Mammary epithelial cell (primary cell): ENCODE measurements at regions of chr2 and their contacts with region 1.

Region 1: GRCh38 chr2:136247204-136247950 is 129.4 kb upstream of the CXCR4 start:
- DNase-seq: peak; percentile 9
- H3K4me3 ChIP-seq: no peak overlapping the region
- H3K27ac ChIP-seq: no peak overlapping the region
- H3K4me1 ChIP-seq: no peaks in the 10 kb centered on the region
- H3K27me3 ChIP-seq: no peaks in the 10 kb centered on the region
- CTCF ChIP-seq: no peak

Region 2: DNA sequence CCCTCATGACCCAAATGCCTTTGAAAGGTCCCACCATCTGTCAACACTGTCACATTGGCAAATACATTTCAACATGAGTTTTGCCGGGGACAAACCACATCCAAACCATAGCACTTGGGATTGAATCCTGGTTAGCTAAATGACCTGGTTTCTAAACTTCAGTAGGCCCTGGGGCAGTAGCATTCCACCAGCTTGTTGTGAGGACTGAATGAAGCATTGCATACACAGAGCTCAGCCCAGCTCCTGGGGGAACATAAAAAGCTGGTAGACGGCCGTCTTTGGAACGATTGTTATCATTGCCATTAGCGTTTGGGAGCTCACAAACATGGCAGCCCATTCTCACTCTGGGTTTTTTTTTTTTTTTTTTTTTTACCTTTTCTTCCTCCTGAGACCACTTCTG is 71.9 kb before region 1 on chr2:
- CTCF ChIA-PET with region 1: interaction called, 10 read pairs
- dilution Hi-C with region 1: no loop called
- in situ Hi-C with region 1: no loop called
- intact Hi-C with region 1: no loop called
- DNase-seq: no peak
- H3K4me3 ChIP-seq: no peak overlapping the region
- H3K27ac ChIP-seq: no peak overlapping the region
- H3K4me1 ChIP-seq: no peaks in the 10 kb centered on the region
- H3K27me3 ChIP-seq: peaks cover 3% of the 10 kb centered on the region
- CTCF ChIP-seq: no peak

Region 3: DNA sequence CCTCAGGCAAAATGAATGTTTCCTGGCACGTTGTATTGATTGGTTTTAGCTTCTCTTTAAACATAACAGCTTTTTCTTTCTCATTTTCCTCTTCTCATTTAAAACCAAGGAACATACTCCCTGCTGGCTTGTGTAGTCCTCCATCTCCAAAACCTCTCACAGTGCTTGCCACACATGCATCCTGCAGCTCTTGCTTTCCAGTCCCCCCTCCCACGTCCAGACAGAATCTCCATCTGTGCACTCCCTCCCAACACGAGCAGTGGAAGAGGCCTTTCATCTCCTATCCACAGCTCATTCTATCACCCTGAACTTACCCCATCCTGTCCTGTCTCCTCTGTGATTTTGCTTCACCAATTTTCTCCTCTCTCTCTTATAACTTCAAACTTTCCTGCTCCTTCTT is 418.4 kb after region 1 on chr2:
- CTCF ChIA-PET with region 1: no interaction called
- dilution Hi-C with region 1: no loop called
- in situ Hi-C with region 1: no loop called
- intact Hi-C with region 1: no loop called
- DNase-seq: no peak
- H3K4me3 ChIP-seq: no peak overlapping the region
- H3K27ac ChIP-seq: no peak overlapping the region
- H3K4me1 ChIP-seq: no peaks in the 10 kb centered on the region
- H3K27me3 ChIP-seq: no peaks in the 10 kb centered on the region
- CTCF ChIP-seq: no peak